Sigmoid colon (tissue), 7 donors: ENCODE measurements at regions of chr11 and their contacts with region 1.

Region 1: GRCh38 chr11:66677599-66678375 is at the start of gene RBM4B:
- DNase-seq: peak; percentile 99
- H3K4me3 ChIP-seq: peak within 1 kb of the TSS; percentile 70 to 83 (median 78)
- H3K27ac ChIP-seq: peak within 1 kb of the TSS; percentile 94 to 97 (median 96)
- H3K4me1 ChIP-seq: peaks cover 0 to 51% (median 43%) of the 10 kb centered on the region in 4 donors
- H3K27me3 ChIP-seq: no peaks in the 10 kb centered on the region
- CTCF ChIP-seq: no peak
- EP300 ChIP-seq: no peak
- POLR2A ChIP-seq: peak; percentile 59 to 72
- total RNA-seq, gene RBM4B: 14.0 to 30.7 (median 16.6) TPM

Region 2: GRCh38 chr11:66408488-66409214 is 269.1 kb before region 1 on chr11:
- intact Hi-C with region 1: loop called (anchors 2 kb)
- DNase-seq: peak; percentile 98
- H3K4me3 ChIP-seq: peak overlapping the region; percentile 29 to 52 (median 46)
- H3K27ac ChIP-seq: peak overlapping the region; percentile 82 to 96 (median 85)
- H3K4me1 ChIP-seq: peaks cover 0 to 52% (median 47%) of the 10 kb centered on the region in 4 donors
- H3K27me3 ChIP-seq: no peaks in the 10 kb centered on the region
- CTCF ChIP-seq: peak; percentile 99 to 100 (median 100)
- EP300 ChIP-seq: peak; percentile 45 to 89 (median 79)
- POLR2A ChIP-seq: peak in 1 of 2 donors; percentile 37

Region 3: DNA sequence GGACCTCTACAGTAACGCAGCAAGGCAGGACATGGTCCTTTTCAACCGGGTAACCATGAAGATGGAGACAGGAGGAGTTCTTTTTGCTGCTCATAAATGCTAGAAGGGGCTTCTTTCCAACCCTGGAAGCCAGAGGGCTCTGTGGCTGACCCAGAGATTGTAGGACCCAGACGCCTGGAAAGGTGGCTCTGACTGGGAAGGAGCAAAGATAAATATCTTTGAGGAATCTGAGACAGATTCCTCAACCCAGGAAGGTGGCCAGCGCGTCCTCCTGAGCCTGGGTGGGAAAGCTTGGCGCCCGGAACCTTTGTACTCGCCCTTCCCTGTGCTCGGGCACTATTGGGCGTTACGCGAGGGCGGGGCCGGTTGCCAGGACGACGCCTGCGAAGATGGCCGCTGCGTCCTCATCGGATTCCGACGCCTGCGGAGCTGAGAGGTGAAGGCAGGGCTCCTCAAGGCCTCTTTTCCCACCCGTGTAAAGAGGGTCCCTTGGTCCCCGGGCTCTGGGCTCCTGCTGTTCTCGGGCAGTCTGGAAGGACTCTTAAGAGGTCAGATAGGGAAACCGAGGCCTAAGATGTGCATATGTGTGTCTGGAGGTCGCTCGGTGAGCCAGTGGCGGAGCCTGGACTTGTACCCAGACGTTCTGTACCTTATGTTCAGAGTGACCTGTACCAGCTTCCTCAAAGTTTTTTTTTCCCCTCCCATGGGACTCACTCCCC is 167.4 kb before region 1 on chr11 and contains the start of gene BBS1:
- intact Hi-C with region 1: loop called (anchors 1 kb)
- DNase-seq: peak; percentile 93
- H3K4me3 ChIP-seq: peak within 1 kb of the TSS; percentile 67 to 89 (median 82)
- H3K27ac ChIP-seq: peak within 1 kb of the TSS; percentile 58 to 74 (median 72)
- H3K4me1 ChIP-seq: peaks cover 0 to 20% (median 11%) of the 10 kb centered on the region in 4 donors
- H3K27me3 ChIP-seq: no peaks in the 10 kb centered on the region
- CTCF ChIP-seq: no peak
- EP300 ChIP-seq: no peak
- POLR2A ChIP-seq: peak; percentile 55 to 65
- total RNA-seq, gene BBS1: 50.2 to 91.4 (median 57.8) TPM

Region 4: GRCh38 chr11:66579017-66579606 is 98.7 kb before region 1 on chr11:
- intact Hi-C with region 1: loop called (anchors 1 kb)
- DNase-seq: peak; percentile 89
- H3K4me3 ChIP-seq: no peak overlapping the region
- H3K27ac ChIP-seq: no peak overlapping the region
- H3K4me1 ChIP-seq: peaks cover 0 to 7% (median 2%) of the 10 kb centered on the region in 4 donors
- H3K27me3 ChIP-seq: no peaks in the 10 kb centered on the region
- CTCF ChIP-seq: peak; percentile 81 to 92 (median 90)
- EP300 ChIP-seq: no peak
- POLR2A ChIP-seq: no peak

Region 5: GRCh38 chr11:66592457-66593302 is 85.1 kb before region 1 on chr11 and contains the starts of genes CCDC87 and CCS:
- intact Hi-C with region 1: loop called (anchors 1 kb)
- DNase-seq: peak; percentile 99
- H3K4me3 ChIP-seq: peak within 1 kb of the TSS; percentile 56 to 78 (median 62)
- H3K27ac ChIP-seq: peak within 1 kb of the TSS; percentile 85 to 88 (median 88)
- H3K4me1 ChIP-seq: peaks cover 0 to 45% (median 40%) of the 10 kb centered on the region in 4 donors
- H3K27me3 ChIP-seq: no peaks in the 10 kb centered on the region
- CTCF ChIP-seq: peak in 3 of 4 experiments; percentile 65 to 86 (median 85)
- EP300 ChIP-seq: no peak
- POLR2A ChIP-seq: peak; percentile 95
- total RNA-seq, gene CCDC87: 0.14 to 0.71 (median 0.16) TPM in 3 of 4 donors, not detected in the other
- total RNA-seq, gene CCS: 26.0 to 43.1 (median 40.5) TPM

Region 6: GRCh38 chr11:66638177-66639065 is 39.4 kb before region 1 on chr11 and contains the start of gene RBM4:
- intact Hi-C with region 1: loop called (anchors 2 kb)
- DNase-seq: peak; percentile 100
- H3K4me3 ChIP-seq: peak within 1 kb of the TSS; percentile 58 to 77 (median 74)
- H3K27ac ChIP-seq: peak within 1 kb of the TSS; percentile 89 to 92 (median 92)
- H3K4me1 ChIP-seq: peaks cover 0 to 71% (median 59%) of the 10 kb centered on the region in 4 donors
- H3K27me3 ChIP-seq: no peaks in the 10 kb centered on the region
- CTCF ChIP-seq: no peak
- EP300 ChIP-seq: no peak
- POLR2A ChIP-seq: peak; percentile 89 to 93
- total RNA-seq, gene RBM4: 76.5 to 101 (median 86.2) TPM